GM10248 (cell line): ENCODE measurements at regions of chr10 and their contacts with region 1.

Region 1: GRCh38 chr10:131874991-131875451 is 25.8 kb upstream of the PPP2R2D start:
- DNase-seq: peak; percentile 87
- CTCF ChIP-seq: peak; percentile 80

Region 2: GRCh38 chr10:130190055-130190736 is 1684.8 kb before region 1 on chr10:
- CTCF ChIA-PET with region 1: interaction called, 36 read pairs
- POLR2A ChIA-PET with region 1: no interaction called
- DNase-seq: peak; percentile 93
- CTCF ChIP-seq: peak; percentile 100

Region 3: DNA sequence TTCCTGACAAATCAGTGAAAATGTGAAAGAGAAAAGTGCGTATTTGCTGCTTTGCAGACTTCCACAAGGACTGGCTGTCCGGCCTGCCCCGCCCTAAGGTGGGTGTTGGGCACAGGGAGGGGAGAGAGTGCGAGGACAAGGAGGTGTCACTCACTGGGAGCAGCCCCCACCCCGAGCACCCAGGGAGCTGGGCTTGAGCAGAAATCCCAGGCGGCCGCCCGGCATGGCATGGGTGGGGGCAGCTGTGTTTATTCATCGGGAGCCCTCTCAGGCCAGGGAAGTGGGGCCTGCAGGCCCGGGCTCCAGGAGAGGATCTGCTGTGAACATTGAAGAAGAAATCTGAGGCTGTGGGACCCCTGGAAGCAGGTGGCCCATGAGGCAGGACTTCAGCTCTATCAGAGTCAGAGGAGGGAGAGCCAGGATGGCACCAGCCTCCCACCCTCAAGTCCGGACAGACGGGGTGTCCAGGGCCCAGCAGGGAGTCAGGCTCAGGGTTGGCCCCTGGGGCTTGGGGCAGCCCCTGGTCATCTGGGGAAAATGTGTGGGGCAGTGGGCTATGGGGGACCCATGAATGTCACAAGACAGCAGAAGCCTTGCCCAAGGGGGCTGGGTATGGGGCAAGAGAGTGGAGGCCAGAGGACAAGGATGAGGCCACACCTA is 138.6 kb before region 1 on chr10:
- CTCF ChIA-PET with region 1: no interaction called
- POLR2A ChIA-PET with region 1: no interaction called
- DNase-seq: no peak
- CTCF ChIP-seq: no peak